MCF 10A (cell line): ENCODE measurements at regions of chr5 and their contacts with region 1.

Region 1: DNA sequence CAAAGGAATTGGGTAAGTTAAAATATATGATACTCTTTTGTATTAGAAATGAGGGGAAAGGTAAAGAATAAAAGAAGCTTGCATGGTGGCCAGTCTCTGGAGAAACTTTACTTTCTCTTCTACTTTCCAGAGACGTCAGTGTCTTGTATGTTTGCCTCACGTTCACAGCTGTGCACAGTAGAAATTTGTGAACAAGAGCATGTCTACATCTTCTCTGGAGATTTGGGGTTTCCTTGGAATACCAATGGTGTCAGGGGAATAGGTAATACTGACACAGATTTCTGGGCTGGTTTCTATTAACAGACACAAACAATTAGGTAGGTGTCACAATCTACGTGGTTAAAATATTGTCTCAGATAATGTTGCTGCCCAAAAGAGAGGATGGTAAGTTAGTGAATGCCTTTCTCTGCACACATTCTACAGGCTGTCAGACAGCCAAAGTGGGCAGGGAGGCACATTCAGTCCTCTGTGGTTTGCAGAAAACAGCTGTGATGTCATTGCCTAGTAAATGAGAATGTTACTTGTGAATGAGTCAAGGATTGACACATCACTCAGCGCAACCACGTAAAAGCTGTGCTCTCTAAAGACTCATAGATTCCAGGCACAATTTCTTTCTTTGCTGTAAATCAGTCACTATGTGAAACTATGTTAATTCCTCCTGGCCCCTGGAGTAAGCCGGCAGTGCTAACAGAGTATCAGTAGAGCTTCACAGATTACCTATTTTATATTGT is 397.1 kb downstream of the MAN2A1 start:
- DNase-seq: peak; percentile 97
- H3K4me3 Mint-ChIP-seq: peak overlapping the region; percentile 59
- H3K27ac Mint-ChIP-seq: peak overlapping the region; percentile 92
- H3K4me1 Mint-ChIP-seq: peaks cover 18% of the 10 kb centered on the region
- H3K27me3 Mint-ChIP-seq: no peaks in the 10 kb centered on the region
- CTCF ChIP-seq: no peak

Region 2: GRCh38 chr5:109936996-109937395 is 149.8 kb before region 1 on chr5:
- CTCF ChIA-PET with region 1: no interaction called
- POLR2A ChIA-PET with region 1: no interaction called
- intact Hi-C with region 1: no loop called
- DNase-seq: no peak
- H3K4me3 Mint-ChIP-seq: no peak overlapping the region
- H3K27ac Mint-ChIP-seq: no peak overlapping the region
- H3K4me1 Mint-ChIP-seq: peaks cover 8% of the 10 kb centered on the region
- H3K27me3 Mint-ChIP-seq: no peaks in the 10 kb centered on the region
- CTCF ChIP-seq: no peak

Region 3: DNA sequence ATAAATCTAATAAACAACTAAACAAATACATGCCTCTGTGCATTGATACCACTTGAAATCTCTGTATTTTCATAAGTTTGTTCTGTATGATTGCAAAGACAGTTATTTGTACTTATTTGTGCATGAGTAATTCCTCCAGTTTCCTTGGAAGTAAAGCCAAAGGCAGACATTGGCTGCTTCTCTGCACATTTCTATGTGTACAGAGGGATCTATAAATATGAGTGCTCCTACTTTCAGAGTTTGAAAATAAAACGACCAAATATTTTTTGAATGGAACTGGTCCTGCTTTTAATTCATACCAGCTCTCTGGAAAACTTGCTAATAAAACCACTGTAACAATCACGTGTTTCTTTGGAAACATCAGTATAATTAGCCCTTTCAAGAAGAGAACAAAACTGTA is 90.6 kb before region 1 on chr5:
- CTCF ChIA-PET with region 1: interaction called, 3 read pairs
- POLR2A ChIA-PET with region 1: interaction called, 11 read pairs
- intact Hi-C with region 1: no loop called
- DNase-seq: no peak
- H3K4me3 Mint-ChIP-seq: no peak overlapping the region
- H3K27ac Mint-ChIP-seq: no peak overlapping the region
- H3K4me1 Mint-ChIP-seq: peaks cover 26% of the 10 kb centered on the region
- H3K27me3 Mint-ChIP-seq: no peaks in the 10 kb centered on the region
- CTCF ChIP-seq: no peak

Region 4: GRCh38 chr5:110031402-110032140 is 55.3 kb before region 1 on chr5:
- CTCF ChIA-PET with region 1: no interaction called
- POLR2A ChIA-PET with region 1: no interaction called
- intact Hi-C with region 1: no loop called
- DNase-seq: peak; percentile 18
- H3K4me3 Mint-ChIP-seq: no peak overlapping the region
- H3K27ac Mint-ChIP-seq: no peak overlapping the region
- H3K4me1 Mint-ChIP-seq: peaks cover 5% of the 10 kb centered on the region
- H3K27me3 Mint-ChIP-seq: no peaks in the 10 kb centered on the region
- CTCF ChIP-seq: no peak

Region 5: DNA sequence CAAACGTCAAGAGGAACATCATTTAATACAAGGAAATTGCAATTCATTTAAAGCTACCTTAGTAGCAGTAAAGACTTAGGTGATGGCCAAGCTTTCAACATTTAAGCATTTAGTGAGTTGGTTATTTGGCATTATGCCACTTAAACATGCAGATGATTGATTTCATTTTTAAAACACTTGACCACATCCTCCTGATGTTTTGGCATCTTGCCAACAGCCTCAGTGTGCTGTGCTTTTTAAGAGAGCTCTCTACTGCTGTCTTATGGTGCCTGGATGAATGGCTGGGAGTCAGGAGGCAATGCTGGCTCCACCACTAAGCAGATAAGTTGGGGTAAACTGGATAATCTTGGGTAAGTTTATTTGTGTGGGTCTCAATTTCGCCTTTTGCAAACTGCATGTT is 32.6 kb before region 1 on chr5:
- CTCF ChIA-PET with region 1: no interaction called
- POLR2A ChIA-PET with region 1: interaction called, 18 read pairs
- intact Hi-C with region 1: no loop called
- DNase-seq: peak; percentile 95
- H3K4me3 Mint-ChIP-seq: no peak overlapping the region
- H3K27ac Mint-ChIP-seq: peak overlapping the region; percentile 33
- H3K4me1 Mint-ChIP-seq: peaks cover 30% of the 10 kb centered on the region
- H3K27me3 Mint-ChIP-seq: no peaks in the 10 kb centered on the region
- CTCF ChIP-seq: peak; percentile 36

Region 6: GRCh38 chr5:110063640-110064602 is 22.9 kb before region 1 on chr5:
- CTCF ChIA-PET with region 1: no interaction called
- POLR2A ChIA-PET with region 1: interaction called, 10 read pairs
- intact Hi-C with region 1: no loop called
- DNase-seq: no peak
- H3K4me3 Mint-ChIP-seq: no peak overlapping the region
- H3K27ac Mint-ChIP-seq: no peak overlapping the region
- H3K4me1 Mint-ChIP-seq: peaks cover 8% of the 10 kb centered on the region
- H3K27me3 Mint-ChIP-seq: no peaks in the 10 kb centered on the region
- CTCF ChIP-seq: no peak

Region 7: GRCh38 chr5:110105692-110106091 is 18.9 kb after region 1 on chr5:
- CTCF ChIA-PET with region 1: no interaction called
- POLR2A ChIA-PET with region 1: interaction called, 11 read pairs
- intact Hi-C with region 1: no loop called
- DNase-seq: peak; percentile 85
- H3K4me3 Mint-ChIP-seq: no peak overlapping the region
- H3K27ac Mint-ChIP-seq: no peak overlapping the region
- H3K4me1 Mint-ChIP-seq: peaks cover 11% of the 10 kb centered on the region
- H3K27me3 Mint-ChIP-seq: no peaks in the 10 kb centered on the region
- CTCF ChIP-seq: no peak